Psoas muscle (tissue), 8 donors: ENCODE measurements at regions of chr3 and their contacts with region 1.

Region 1: GRCh38 chr3:183924956-183925355 is 40.3 kb upstream of the PARL start:
- DNase-seq: no peak
- ATAC-seq: no peak
- H3K4me3 ChIP-seq: no peak overlapping the region
- H3K27ac ChIP-seq: no peak overlapping the region
- H3K4me1 ChIP-seq: no peaks in the 10 kb centered on the region
- H3K27me3 ChIP-seq: no peaks in the 10 kb centered on the region
- CTCF ChIP-seq: no peak

Region 2: DNA sequence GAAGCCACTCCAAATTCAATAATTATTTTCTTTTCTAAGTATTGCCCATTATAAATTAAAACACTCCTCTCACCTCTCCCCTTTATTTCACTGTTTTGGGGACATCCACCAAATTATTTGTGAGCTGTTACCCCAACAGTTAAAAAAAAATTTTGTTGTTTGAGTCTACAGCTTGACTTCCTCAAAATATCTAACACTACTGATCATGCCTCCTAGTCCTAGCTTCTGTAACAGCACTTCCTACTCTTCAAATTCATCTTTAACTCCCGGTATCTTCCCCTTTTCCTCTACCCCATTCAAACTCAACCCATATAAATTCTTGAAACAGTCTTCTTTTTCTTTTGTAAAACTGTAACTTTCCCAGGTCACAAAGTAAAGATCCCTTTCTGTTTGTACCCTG is 56.2 kb before region 1 on chr3:
- intact Hi-C with region 1: no loop called
- DNase-seq: no peak
- ATAC-seq: no peak
- H3K4me3 ChIP-seq: no peak overlapping the region
- H3K27ac ChIP-seq: no peak overlapping the region
- H3K4me1 ChIP-seq: peaks cover 13% of the 10 kb centered on the region
- H3K27me3 ChIP-seq: no peaks in the 10 kb centered on the region
- CTCF ChIP-seq: no peak

Region 3: GRCh38 chr3:183966251-183966801 is 41.4 kb after region 1 on chr3:
- intact Hi-C with region 1: loop called in 1 of 2 experiments (anchors 5 kb)
- DNase-seq: no peak
- ATAC-seq: no peak
- H3K4me3 ChIP-seq: no peak overlapping the region
- H3K27ac ChIP-seq: no peak overlapping the region
- H3K4me1 ChIP-seq: no peaks in the 10 kb centered on the region
- H3K27me3 ChIP-seq: no peaks in the 10 kb centered on the region
- CTCF ChIP-seq: no peak

Region 4: DNA sequence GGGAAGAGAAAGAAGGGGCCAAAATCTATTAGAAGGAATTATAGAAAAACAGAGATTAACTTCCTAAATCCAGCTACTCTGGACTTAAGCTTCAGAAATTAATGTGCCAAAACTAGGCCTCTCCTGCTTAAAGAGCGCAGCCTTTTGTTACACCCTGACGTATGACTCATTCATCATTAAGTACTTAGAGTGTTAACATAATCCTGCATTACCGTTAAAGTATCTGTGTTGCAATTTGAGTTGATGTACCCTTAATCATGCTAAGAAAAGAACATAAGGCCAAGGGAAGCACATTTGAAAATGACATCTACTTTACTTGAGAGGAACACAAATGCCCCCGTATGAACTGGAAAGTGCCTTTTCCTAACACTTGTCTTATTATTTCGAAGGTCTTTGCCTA is 114.5 kb after region 1 on chr3:
- intact Hi-C with region 1: no loop called
- DNase-seq: no peak
- ATAC-seq: no peak
- H3K4me3 ChIP-seq: no peak overlapping the region
- H3K27ac ChIP-seq: no peak overlapping the region
- H3K4me1 ChIP-seq: no peaks in the 10 kb centered on the region
- H3K27me3 ChIP-seq: no peaks in the 10 kb centered on the region
- CTCF ChIP-seq: no peak